Adrenal gland (tissue), 19 donors: ENCODE measurements at regions of chr12 and their contacts with region 1.

Region 1: DNA sequence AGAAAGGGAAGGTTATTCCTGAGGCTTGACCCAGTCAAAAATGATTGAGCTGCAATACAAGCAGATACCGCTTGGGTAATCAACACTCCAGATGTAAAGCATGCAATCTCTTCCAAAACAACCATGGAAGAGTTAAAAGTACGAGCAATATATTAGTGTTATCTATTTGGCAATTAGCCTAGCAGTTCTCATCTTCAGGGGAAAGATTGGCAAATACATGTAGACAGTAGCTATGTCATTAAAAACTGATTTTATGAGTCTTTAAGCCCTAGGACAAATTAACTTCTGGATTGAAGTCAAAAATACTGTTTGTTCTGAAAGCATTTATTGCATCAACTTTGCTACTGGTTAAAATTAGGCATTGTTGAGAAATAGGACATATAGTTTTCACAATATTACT is 9.3 kb upstream of the GYS2 start:
- DNase-seq: no peak
- H3K4me3 ChIP-seq: no peak overlapping the region
- H3K27ac ChIP-seq: no peak overlapping the region
- H3K4me1 ChIP-seq: peaks cover 0 to 15% of the 10 kb centered on the region in 2 donors
- H3K27me3 ChIP-seq: no peaks in the 10 kb centered on the region
- CTCF ChIP-seq: peak in 1 of 6 experiments; percentile 17
- POLR2A ChIP-seq: no peak

Region 2: DNA sequence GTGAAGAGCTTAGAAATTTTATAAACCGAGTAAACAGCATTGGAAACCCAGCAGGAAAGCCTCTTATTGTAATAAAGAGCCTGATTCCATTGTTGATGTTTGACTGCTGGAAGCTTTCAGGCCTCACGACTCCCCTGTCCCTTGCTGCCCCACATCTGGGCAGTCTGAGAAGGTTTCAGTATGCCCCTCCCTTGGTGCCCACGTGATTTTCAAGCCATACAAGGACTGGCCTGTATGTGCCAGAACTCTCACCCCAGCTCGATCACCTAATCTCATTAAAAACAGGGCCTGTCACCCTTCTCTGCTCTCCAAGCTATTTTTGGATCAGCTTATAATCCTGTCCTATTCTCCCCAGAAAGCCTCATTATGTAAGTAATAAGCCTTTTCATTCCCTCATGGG is 183.9 kb before region 1 on chr12:
- intact Hi-C with region 1: no loop called
- DNase-seq: no peak
- H3K4me3 ChIP-seq: no peak overlapping the region
- H3K27ac ChIP-seq: no peak overlapping the region
- H3K4me1 ChIP-seq: no peaks in the 10 kb centered on the region
- H3K27me3 ChIP-seq: peaks cover 10% of the 10 kb centered on the region
- CTCF ChIP-seq: no peak
- POLR2A ChIP-seq: no peak

Region 3: DNA sequence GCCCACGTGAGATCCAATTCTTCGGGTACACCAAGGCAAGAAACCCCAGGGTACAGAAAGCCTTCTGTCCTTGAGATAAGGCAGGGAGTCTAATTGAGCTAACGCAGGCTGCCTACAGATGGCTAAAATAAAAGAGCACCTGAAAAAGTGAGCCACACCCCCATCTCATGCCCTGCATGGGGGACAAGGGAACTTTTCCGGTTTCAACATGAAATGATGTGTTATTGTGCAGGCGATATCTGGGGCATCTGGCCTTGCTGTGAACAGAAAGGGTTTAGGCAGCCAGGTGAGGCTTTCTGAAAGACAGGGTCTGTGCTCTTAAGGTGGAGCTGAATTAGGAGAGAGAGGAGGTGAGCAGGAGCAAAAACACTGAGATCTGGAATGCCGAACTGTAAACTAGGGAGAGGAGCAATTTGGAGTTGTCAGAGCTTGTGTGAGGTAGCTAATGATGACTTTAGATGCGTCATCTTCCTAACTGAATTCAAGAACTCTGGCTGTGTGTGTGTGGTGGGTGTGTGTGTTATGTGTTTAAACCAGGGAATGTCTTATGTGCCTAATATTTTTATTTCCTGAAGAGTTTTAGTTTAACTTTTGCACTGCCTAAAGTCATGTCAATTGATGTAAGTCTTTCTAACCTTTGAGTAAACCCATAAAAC is 63.8 kb after region 1 on chr12:
- intact Hi-C with region 1: loop called in 1 of 2 experiments (anchors 10 kb)
- DNase-seq: no peak
- H3K4me3 ChIP-seq: no peak overlapping the region
- H3K27ac ChIP-seq: no peak overlapping the region
- H3K4me1 ChIP-seq: no peaks in the 10 kb centered on the region
- H3K27me3 ChIP-seq: no peaks in the 10 kb centered on the region
- CTCF ChIP-seq: no peak
- POLR2A ChIP-seq: no peak